ENCODE measurements at regions of chr10 and their contacts with region 1.

Region 1: DNA sequence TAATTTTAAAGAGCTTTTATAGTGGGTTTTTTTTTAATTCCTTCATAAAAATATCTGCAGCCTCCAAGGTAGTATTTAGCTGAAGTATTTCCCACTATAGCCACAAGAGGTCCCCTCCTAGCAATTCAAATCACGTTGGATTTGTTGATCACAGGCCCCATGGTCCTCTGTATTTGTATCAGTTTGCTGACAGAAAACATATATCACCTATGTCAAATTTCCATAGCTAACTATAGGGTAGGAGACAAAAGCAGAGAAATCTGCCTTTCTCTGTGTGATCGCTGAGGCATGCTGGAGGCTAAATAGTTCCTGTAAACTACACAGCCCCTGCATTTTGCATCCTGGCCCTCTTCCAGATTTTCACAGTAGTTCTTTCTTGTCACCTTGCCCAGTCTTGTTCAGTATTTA is 1.7 kb upstream of the CTNNA3 start:
- DNase-seq: peak; percentile 44
- H3K4me3 Mint-ChIP-seq: no peak overlapping the region
- H3K27ac Mint-ChIP-seq: no peak overlapping the region
- H3K4me1 Mint-ChIP-seq: no peaks in the 10 kb centered on the region
- H3K27me3 Mint-ChIP-seq: peaks cover 63% of the 10 kb centered on the region
- CTCF ChIP-seq: peak; percentile 57

Region 2: GRCh38 chr10:66671064-66671463 is 1026.7 kb before region 1 on chr10:
- CTCF ChIA-PET with region 1: no interaction called
- intact Hi-C with region 1: no loop called
- DNase-seq: no peak
- H3K4me3 Mint-ChIP-seq: no peak overlapping the region
- H3K27ac Mint-ChIP-seq: no peak overlapping the region
- H3K4me1 Mint-ChIP-seq: no peaks in the 10 kb centered on the region
- H3K27me3 Mint-ChIP-seq: no peaks in the 10 kb centered on the region
- CTCF ChIP-seq: no peak

Region 3: GRCh38 chr10:67764012-67764822 is 66.5 kb after region 1 on chr10:
- CTCF ChIA-PET with region 1: interaction called, 6 read pairs
- intact Hi-C with region 1: loop called (anchors 1 kb)
- DNase-seq: peak; percentile 96
- H3K4me3 Mint-ChIP-seq: peak overlapping the region; percentile 71
- H3K27ac Mint-ChIP-seq: peak overlapping the region; percentile 99
- H3K4me1 Mint-ChIP-seq: no peaks in the 10 kb centered on the region
- H3K27me3 Mint-ChIP-seq: peaks cover 17% of the 10 kb centered on the region
- CTCF ChIP-seq: no peak

Region 4: DNA sequence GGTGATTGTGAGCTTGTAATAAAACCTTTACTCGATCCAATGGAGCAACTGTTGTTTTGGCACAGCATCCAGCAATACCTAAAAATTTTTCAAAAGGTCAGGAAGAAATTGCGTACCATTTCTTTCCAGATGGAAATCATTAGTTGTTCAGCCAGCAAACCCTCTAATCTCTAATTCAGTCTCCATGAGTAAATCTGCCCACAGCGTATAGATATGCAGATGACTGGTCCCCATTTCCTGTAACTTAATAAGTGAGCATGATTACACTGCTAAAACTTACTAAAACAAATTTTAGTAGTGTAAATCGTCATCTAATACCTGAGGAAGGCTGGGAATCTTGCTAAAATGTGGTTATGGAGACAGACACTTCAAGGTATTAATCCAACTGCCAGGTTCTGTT is 819.0 kb after region 1 on chr10:
- CTCF ChIA-PET with region 1: no interaction called
- intact Hi-C with region 1: no loop called
- DNase-seq: no peak
- H3K4me3 Mint-ChIP-seq: no peak overlapping the region
- H3K27ac Mint-ChIP-seq: no peak overlapping the region
- H3K4me1 Mint-ChIP-seq: no peaks in the 10 kb centered on the region
- H3K27me3 Mint-ChIP-seq: no peaks in the 10 kb centered on the region
- CTCF ChIP-seq: no peak

Measured in Calu3 (cell line).